Cardiac septum (tissue), 1 donor: ENCODE measurements at regions of chr16 and their contacts with region 1.

Region 1: GRCh38 chr16:22190776-22191531 is 15.1 kb upstream of the EEF2K start:
- DNase-seq: peak; percentile 100

Region 2: DNA sequence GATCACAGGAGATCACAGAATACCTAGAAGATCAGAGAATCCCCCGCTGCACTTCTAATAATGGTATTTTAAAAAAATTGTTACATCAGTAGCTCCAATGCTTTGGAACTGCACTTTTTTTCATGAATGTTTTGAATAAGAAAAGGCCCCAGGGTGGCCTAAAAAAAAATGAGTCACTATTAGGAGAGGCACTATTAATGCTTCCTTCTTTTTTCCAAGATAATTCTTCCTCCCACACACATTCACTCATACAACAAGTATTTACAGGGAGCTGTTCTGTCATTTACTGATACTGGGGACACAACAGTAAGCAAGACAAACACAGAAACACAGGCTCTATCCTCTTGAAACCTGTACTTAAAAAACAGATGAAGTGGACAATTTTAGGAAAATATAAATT is 189.4 kb before region 1 on chr16:
- intact Hi-C with region 1: loop called (anchors 2 kb)
- DNase-seq: no peak

Region 3: GRCh38 chr16:22007509-22008214 is 183.3 kb before region 1 on chr16 and contains the start of gene MOSMO:
- intact Hi-C with region 1: loop called (anchors 2 kb)
- DNase-seq: peak; percentile 87
- total RNA-seq, gene MOSMO: 11.9 TPM

Region 4: DNA sequence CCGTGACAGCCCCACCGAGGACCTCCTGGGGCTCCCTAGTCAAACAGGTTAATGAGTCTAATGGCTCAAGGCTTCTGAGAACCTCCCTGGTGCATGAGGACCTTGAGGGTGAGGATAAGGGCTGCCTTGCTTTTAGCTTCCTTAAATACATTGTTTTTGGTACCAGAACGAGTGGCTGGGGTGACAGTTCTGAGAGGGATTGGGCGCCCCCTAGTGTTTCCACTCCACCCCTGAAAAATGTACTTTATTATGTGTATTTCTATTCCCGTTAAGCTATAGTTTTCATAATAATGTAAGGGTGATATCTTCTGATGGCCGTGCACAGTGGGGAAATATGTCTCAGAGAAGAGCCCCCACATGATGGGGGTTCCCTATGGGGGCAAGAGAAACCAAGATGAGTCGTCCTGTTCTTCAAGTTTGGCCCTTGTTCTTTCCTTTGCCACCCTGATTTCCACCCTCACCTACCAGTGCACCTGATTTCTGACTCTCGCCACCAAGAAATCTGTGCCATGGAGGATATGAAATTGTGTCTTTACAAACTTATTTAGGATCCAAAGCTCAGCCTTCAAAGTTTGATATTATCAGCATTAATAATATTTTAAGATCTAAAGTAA is 113.1 kb before region 1 on chr16:
- intact Hi-C with region 1: loop called (anchors 5 kb)
- DNase-seq: no peak

Region 5: DNA sequence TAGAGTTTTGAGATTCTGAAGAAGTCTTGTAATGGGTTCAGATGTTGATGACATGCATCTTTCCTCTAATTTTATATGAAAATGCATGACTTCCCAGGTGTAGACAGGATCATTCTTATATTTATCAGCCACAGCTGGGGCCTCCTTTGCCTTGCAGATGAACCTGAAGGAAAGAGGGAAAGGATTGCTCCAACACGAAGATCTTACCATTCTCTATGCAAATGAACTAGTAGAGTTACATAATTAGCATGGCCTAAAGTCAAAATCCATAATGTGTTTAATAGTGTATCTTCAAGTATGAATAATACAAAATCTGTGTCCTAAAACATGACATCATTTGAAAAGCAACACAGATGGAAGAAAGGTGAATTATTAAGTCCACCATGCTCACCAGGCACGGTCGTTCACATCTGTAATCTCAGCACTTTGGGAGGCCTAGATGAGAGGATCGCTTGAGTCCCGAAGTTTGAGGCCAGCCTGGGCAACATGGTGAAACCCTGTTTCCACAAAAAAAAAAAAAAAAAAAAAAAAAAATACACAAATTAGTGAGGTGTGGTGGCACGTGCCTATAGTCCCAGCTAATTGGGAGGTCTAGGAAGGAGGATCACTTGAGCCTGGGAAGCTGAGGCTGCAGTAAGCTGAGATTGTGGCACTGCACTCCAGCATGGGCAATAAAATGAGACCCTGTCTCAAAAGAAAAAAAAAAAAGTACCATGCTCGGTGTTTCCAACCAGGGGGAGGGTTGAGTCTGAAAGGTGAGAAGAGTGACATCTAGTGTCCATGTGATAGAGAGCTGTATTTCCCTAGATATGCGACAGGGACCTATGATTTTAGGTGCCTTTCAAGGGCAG is 92.3 kb before region 1 on chr16:
- intact Hi-C with region 1: loop called (anchors 5 kb)
- DNase-seq: no peak

Region 6: GRCh38 chr16:22206013-22206841 is 15.3 kb after region 1 on chr16 and contains the start of gene EEF2K:
- intact Hi-C with region 1: loop called (anchors 1 kb)
- DNase-seq: peak; percentile 94
- total RNA-seq, gene EEF2K: 16.2 TPM

Region 7: DNA sequence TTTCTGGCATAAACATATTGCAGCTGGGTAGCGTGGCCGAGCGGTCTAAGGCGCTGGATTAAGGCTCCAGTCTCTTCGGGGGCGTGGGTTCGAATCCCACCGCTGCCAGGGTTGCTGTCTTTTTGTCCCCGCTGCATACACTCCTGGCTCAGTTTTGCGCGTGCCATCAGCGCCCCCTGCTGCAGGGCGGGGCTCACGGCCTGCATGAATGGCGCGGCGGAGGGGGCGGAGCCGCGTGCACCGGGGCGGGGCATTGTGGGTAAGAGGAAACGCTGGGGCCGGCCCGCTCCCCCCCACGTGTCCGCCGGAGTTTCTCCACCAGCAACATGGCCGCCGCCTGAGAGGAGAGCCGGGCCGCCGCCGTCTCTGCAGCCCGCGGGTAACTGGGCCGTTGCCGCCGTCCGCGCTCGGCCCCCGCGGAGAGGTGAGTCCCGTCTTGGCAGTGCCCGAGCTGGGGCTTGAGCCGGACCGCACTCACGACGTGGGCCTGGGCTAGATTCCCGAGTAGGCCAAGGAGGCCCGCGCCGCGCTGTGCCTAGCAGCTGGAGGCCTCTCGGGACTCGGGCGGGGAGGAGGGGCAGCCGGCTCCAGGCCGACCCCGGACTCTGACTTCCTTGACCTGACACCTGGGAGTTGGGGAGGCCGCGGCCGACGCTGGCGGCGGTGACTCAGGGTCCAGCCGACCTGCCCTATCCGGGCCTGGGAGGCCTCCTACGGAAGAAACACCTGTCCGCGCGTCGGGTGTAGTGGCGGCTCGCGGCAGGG is 106.3 kb after region 1 on chr16 and contains the start of gene POLR3E:
- intact Hi-C with region 1: loop called (anchors 2 kb)
- DNase-seq: peak; percentile 100
- total RNA-seq, gene POLR3E: 32.7 TPM